Posterior vena cava (tissue), 2 donors: ENCODE measurements at regions of chr19 and their contacts with region 1.

Region 1: DNA sequence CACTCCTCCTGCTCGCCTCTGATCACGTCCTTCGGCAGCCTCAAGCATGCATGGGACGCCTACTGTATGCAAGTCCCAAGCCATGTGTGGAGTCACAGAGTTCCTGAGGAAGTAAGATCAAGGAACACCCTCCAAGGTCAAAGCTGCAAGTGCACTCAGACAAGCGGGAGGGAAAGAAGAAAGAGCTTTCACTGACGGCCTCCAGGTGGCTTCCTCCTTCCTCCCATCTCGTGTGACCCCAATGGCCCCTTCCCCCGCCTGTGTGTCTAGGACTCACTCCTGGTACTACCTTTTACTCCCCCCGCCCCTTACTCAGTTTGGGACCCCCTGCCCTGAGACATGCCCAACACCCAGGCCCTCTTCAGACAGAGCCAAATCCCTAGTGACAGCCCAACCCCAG is 6.0 kb downstream of the HAUS8 start:
- DNase-seq: no peak

Region 2: GRCh38 chr19:16957151-16957701 is 112.0 kb before region 1 on chr19:
- intact Hi-C with region 1: no loop called
- DNase-seq: peak; percentile 58

Region 3: GRCh38 chr19:16969127-16969526 is 100.1 kb before region 1 on chr19:
- intact Hi-C with region 1: no loop called
- DNase-seq: peak; percentile 25

Region 4: DNA sequence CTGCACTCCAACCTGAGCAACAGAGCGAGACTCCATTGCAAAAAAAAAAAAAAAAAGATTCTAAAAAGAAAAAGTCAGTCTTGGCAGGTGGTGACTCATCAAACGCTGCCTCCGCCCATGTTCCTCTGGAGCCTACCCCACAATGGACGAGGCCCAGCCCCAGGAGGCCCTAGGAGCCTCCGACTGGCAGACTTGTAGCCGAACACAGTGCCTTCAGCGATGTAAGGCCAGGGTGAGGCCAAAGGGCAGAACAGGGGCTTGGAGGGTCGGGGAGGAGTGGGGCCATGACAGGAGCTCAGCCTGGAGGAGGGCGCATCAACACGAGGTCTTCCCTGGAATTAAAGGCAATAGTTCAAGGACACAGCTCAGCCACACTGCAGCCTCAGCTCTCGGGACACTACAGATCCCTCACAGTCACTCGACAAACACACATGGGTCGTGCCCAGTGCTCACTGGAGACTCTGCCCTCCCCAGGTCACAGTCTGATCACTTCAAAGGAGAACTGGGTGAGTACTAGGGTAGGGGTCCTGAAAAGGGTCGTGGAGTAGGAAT is 151.1 kb after region 1 on chr19:
- intact Hi-C with region 1: loop called in 1 of 2 experiments (anchors 5 kb)
- DNase-seq: peak; percentile 88